Natural killer cell (primary cell): ENCODE measurements at regions of chr6 and their contacts with region 1.

Region 1: GRCh38 chr6:88266126-88266525 is 100.0 kb upstream of the CNR1 start:
- DNase-seq: no peak
- ATAC-seq: no peak
- H3K4me3 ChIP-seq: no peak overlapping the region
- H3K4me3 Mint-ChIP-seq: no peak overlapping the region
- H3K27ac ChIP-seq: no peak overlapping the region
- H3K27ac Mint-ChIP-seq: no peak overlapping the region
- H3K4me1 ChIP-seq: no peaks in the 10 kb centered on the region
- H3K4me1 Mint-ChIP-seq: no peaks in the 10 kb centered on the region
- H3K27me3 ChIP-seq: no peaks in the 10 kb centered on the region
- H3K27me3 Mint-ChIP-seq: peaks cover 0 to 4% of the 10 kb centered on the region in 2 donors
- CTCF ChIP-seq: no peak

Region 2: GRCh38 chr6:88238065-88238464 is 28.1 kb before region 1 on chr6:
- intact Hi-C with region 1: no loop called
- DNase-seq: peak in 1 of 2 donors; percentile 38
- ATAC-seq: no peak
- H3K4me3 ChIP-seq: no peak overlapping the region
- H3K4me3 Mint-ChIP-seq: no peak overlapping the region
- H3K27ac ChIP-seq: no peak overlapping the region
- H3K27ac Mint-ChIP-seq: no peak overlapping the region
- H3K4me1 ChIP-seq: no peaks in the 10 kb centered on the region
- H3K4me1 Mint-ChIP-seq: no peaks in the 10 kb centered on the region
- H3K27me3 ChIP-seq: no peaks in the 10 kb centered on the region
- H3K27me3 Mint-ChIP-seq: no peaks in the 10 kb centered on the region
- CTCF ChIP-seq: no peak

Region 3: GRCh38 chr6:88298066-88298845 is 32.1 kb after region 1 on chr6:
- intact Hi-C with region 1: loop called (anchors 1 kb)
- DNase-seq: no peak
- ATAC-seq: no peak
- H3K4me3 ChIP-seq: no peak overlapping the region
- H3K4me3 Mint-ChIP-seq: no peak overlapping the region
- H3K27ac ChIP-seq: no peak overlapping the region
- H3K27ac Mint-ChIP-seq: no peak overlapping the region
- H3K4me1 ChIP-seq: no peaks in the 10 kb centered on the region
- H3K4me1 Mint-ChIP-seq: no peaks in the 10 kb centered on the region
- H3K27me3 ChIP-seq: no peaks in the 10 kb centered on the region
- H3K27me3 Mint-ChIP-seq: no peaks in the 10 kb centered on the region
- CTCF ChIP-seq: no peak